PC-9 (cell line): ENCODE measurements at regions of chr1 and their contacts with region 1.

Region 1: GRCh38 chr1:148334339-148335130 is 148.6 kb downstream of the PPIAL4G start:
- DNase-seq: peak; percentile 88 to 97
- H3K4me3 ChIP-seq: peak overlapping the region; percentile 62
- H3K27ac ChIP-seq: peak overlapping the region; percentile 96
- H3K4me1 ChIP-seq: peaks cover 14% of the 10 kb centered on the region
- H3K27me3 ChIP-seq: no peaks in the 10 kb centered on the region
- CTCF ChIP-seq: no peak; the same call in 1 of the 2 replicates

Region 2: DNA sequence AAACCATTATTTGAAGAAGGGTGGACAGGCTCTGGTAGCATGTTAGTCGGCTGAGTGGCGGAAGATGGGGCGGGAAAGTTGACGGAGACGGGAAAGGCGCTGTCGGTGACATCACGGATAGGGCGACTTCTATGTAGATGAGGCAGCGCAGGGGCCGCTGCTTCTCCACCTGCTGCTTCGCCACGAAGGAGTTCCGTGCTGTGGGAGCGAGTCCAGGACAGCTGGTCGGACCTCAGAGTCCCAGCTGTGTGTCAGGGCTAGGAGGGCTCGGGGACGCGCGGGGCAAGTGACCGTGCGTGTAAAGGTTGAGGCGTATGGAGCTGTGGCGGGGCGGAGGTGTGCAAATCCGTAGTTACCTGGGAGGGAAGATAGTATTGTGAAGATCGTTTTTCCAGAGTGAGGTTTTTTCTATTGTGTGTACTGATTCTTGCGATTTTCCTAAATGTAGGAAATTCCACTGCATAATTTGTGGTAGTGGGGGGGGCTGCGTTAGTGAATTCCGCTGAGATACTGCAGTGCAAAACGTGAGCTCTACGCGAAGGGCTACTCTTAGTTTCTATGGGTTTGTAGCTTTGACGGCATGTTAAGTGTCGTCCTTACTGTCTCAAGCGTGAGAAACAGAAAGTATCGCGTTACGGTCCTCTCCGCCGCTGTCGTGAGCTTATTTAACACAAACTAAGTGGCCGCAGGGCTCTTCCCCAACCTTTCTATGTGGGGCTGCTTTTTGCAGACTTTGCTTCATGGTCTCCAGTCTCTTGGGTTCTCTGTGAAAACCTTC is 71.2 kb before region 1 on chr1:
- CTCF ChIA-PET with region 1: interaction called, 5 read pairs
- POLR2A ChIA-PET with region 1: interaction called, 34 read pairs
- intact Hi-C with region 1: loop called (anchors 2 kb)
- DNase-seq: peak; percentile 76 to 99
- H3K4me3 ChIP-seq: peak overlapping the region; percentile 76
- H3K27ac ChIP-seq: peak overlapping the region; percentile 98
- H3K4me1 ChIP-seq: peaks cover 10% of the 10 kb centered on the region
- H3K27me3 ChIP-seq: no peaks in the 10 kb centered on the region
- CTCF ChIP-seq: no peak

Region 3: GRCh38 chr1:148307583-148308190 is 26.8 kb before region 1 on chr1:
- CTCF ChIA-PET with region 1: no interaction called
- POLR2A ChIA-PET with region 1: interaction called, 8 read pairs
- intact Hi-C with region 1: loop called (anchors 2 kb)
- DNase-seq: no peak
- H3K4me3 ChIP-seq: no peak overlapping the region
- H3K27ac ChIP-seq: no peak overlapping the region
- H3K4me1 ChIP-seq: peaks cover 15% of the 10 kb centered on the region
- H3K27me3 ChIP-seq: no peaks in the 10 kb centered on the region
- CTCF ChIP-seq: no peak

Region 4: GRCh38 chr1:148353461-148354283 is 19.1 kb after region 1 on chr1:
- CTCF ChIA-PET with region 1: no interaction called
- POLR2A ChIA-PET with region 1: no interaction called
- intact Hi-C with region 1: no loop called
- DNase-seq: peak; percentile 33 to 72
- H3K4me3 ChIP-seq: no peak overlapping the region
- H3K27ac ChIP-seq: no peak overlapping the region
- H3K4me1 ChIP-seq: peaks cover 10% of the 10 kb centered on the region; the same call in 1 of the 2 replicates
- H3K27me3 ChIP-seq: no peaks in the 10 kb centered on the region
- CTCF ChIP-seq: no peak

Region 5: GRCh38 chr1:148388260-148389027 is 53.9 kb after region 1 on chr1:
- CTCF ChIA-PET with region 1: no interaction called
- POLR2A ChIA-PET with region 1: no interaction called
- intact Hi-C with region 1: loop called (anchors 1 kb)
- DNase-seq: peak; percentile 89 to 91
- H3K4me3 ChIP-seq: peak overlapping the region; percentile 69
- H3K27ac ChIP-seq: peak overlapping the region; percentile 93
- H3K4me1 ChIP-seq: peaks cover 16% of the 10 kb centered on the region
- H3K27me3 ChIP-seq: no peaks in the 10 kb centered on the region
- CTCF ChIP-seq: no peak